T-cell (primary cell): ENCODE measurements at regions of chr3 and their contacts with region 1.

Region 1: DNA sequence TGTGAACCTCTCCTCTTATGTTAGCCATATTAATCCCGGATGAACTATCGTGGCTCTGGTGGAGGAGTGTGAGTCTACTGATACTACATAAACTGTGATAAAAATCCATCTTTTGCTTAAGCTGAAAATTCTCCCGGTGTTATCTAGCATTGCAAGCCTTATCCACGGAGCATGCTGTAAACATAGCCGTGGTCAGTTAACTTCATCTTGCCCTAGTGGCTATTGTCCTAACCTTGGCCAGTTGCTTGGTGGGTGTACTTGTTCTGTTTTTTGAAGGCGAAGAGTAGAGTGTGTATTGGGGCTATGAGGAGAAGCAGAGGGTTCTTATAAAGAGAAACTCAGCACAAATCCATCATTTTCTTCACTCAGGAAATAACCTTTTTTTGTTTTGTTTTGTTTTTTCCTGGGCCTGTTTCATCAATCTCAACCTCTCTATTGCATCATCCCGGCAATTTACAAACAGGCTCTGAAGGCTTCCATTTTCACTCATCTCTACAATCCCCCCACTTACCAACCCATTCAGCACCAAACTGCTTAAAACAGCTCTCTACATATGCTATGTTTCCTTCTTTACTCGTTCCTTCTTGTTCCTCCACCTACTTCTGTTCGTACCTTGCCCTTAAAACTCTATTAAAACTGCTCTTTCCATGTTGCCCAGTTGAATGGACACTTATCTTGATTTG is 135.5 kb upstream of the PTX3 start:
- DNase-seq: no peak
- ATAC-seq: no peak
- H3K4me3 ChIP-seq: no peak overlapping the region
- H3K4me3 Mint-ChIP-seq: no peak overlapping the region
- H3K27ac ChIP-seq: no peak overlapping the region
- H3K27ac Mint-ChIP-seq: no peak overlapping the region
- H3K4me1 ChIP-seq: no peaks in the 10 kb centered on the region
- H3K4me1 Mint-ChIP-seq: no peaks in the 10 kb centered on the region
- H3K27me3 ChIP-seq: no peaks in the 10 kb centered on the region
- H3K27me3 Mint-ChIP-seq: no peaks in the 10 kb centered on the region

Region 2: GRCh38 chr3:155880286-155880685 is 1420.8 kb before region 1 on chr3:
- CTCF ChIA-PET with region 1: no interaction called
- POLR2A ChIA-PET with region 1: interaction called in 1 of 2 experiments, 15 read pairs
- DNase-seq: no peak
- ATAC-seq: no peak
- H3K4me3 ChIP-seq: no peak overlapping the region
- H3K4me3 Mint-ChIP-seq: peak overlapping the region in 1 of 3 donors; percentile 18
- H3K27ac ChIP-seq: no peak overlapping the region
- H3K27ac Mint-ChIP-seq: no peak overlapping the region
- H3K4me1 ChIP-seq: peaks cover 0 to 4% of the 10 kb centered on the region in 2 experiments
- H3K4me1 Mint-ChIP-seq: peaks cover 55 to 73% (median 67%) of the 10 kb centered on the region in 3 donors
- H3K27me3 ChIP-seq: no peaks in the 10 kb centered on the region
- H3K27me3 Mint-ChIP-seq: no peaks in the 10 kb centered on the region

Region 3: GRCh38 chr3:157261000-157261399 is 40.1 kb before region 1 on chr3:
- CTCF ChIA-PET with region 1: no interaction called
- POLR2A ChIA-PET with region 1: no interaction called
- DNase-seq: no peak
- ATAC-seq: no peak
- H3K4me3 ChIP-seq: no peak overlapping the region
- H3K4me3 Mint-ChIP-seq: no peak overlapping the region
- H3K27ac ChIP-seq: no peak overlapping the region
- H3K27ac Mint-ChIP-seq: no peak overlapping the region
- H3K4me1 ChIP-seq: no peaks in the 10 kb centered on the region
- H3K4me1 Mint-ChIP-seq: no peaks in the 10 kb centered on the region
- H3K27me3 ChIP-seq: no peaks in the 10 kb centered on the region
- H3K27me3 Mint-ChIP-seq: no peaks in the 10 kb centered on the region